PC-9 (cell line): ENCODE measurements at regions of chr2 and their contacts with region 1.

Region 1: GRCh38 chr2:61898810-61899209 is 6.7 kb upstream of the COMMD1 start:
- DNase-seq: peak in 1 of 2 experiments; percentile 15
- H3K4me3 ChIP-seq: no peak overlapping the region
- H3K27ac ChIP-seq: no peak overlapping the region
- H3K4me1 ChIP-seq: no peaks in the 10 kb centered on the region
- H3K27me3 ChIP-seq: no peaks in the 10 kb centered on the region
- CTCF ChIP-seq: peak; percentile 69

Region 2: DNA sequence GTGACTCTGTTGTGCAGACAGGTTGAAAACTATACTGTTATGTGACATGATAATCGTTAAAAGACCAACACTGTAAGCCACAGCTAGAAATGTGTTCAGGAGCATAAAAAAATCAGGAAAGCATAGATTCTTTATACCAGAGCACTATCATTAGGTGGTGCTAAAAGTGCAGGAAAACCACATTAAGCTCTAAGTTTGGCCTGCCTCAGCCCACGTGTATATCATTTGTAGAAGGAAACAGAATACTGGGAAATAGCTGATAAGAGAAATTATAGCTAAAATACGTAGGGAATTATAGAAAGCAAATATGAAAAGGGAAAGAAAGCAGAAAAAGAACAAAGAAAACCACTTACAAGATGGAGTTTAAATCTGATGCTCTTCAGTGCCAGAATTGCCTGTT is 763.3 kb before region 1 on chr2:
- CTCF ChIA-PET with region 1: no interaction called
- POLR2A ChIA-PET with region 1: no interaction called
- intact Hi-C with region 1: loop called (anchors 2 kb)
- DNase-seq: peak in 1 of 2 experiments; percentile 41
- H3K4me3 ChIP-seq: no peak overlapping the region
- H3K27ac ChIP-seq: no peak overlapping the region
- H3K4me1 ChIP-seq: no peaks in the 10 kb centered on the region
- H3K27me3 ChIP-seq: no peaks in the 10 kb centered on the region
- CTCF ChIP-seq: peak; percentile 47; the same call in 1 of the 2 replicates